Posterior vena cava (tissue), 2 donors: ENCODE measurements at regions of chr2 and their contacts with region 1.

Region 1: DNA sequence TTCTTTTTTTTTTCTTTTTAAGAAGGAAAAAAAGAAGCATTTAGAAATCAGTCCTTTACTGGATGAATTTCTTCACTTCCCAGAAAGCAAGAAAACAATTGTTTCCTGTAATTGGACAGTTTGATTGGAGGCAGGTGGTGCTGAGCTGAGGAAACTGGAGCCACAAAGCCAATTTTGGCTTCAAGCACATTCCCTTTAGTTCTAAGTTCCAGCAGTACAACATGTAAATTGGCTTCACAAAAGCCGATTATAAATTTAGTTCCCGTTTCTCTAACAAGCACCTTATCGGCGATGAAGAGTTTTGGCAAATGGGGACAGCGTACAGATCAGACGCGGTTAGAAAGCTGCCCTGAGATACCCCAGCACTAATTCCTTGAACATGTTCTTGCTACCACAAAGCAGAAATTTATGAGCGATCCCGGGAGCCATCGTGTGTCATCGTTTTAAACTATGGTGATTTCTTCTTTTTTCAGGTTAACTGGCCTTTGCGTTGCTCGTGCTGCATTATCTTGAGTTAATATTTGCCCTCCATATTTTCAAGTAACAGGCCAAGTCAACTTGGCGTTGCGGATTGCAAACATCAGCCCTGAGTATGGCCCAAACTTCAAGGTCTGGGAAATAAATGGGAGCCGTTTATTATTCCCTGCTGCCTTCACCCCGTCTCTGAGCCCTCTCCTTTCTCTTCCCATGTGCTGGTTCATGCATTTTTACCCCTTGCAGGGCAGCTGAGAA is 190.4 kb upstream of the ID2 start:
- DNase-seq: no peak

Region 2: DNA sequence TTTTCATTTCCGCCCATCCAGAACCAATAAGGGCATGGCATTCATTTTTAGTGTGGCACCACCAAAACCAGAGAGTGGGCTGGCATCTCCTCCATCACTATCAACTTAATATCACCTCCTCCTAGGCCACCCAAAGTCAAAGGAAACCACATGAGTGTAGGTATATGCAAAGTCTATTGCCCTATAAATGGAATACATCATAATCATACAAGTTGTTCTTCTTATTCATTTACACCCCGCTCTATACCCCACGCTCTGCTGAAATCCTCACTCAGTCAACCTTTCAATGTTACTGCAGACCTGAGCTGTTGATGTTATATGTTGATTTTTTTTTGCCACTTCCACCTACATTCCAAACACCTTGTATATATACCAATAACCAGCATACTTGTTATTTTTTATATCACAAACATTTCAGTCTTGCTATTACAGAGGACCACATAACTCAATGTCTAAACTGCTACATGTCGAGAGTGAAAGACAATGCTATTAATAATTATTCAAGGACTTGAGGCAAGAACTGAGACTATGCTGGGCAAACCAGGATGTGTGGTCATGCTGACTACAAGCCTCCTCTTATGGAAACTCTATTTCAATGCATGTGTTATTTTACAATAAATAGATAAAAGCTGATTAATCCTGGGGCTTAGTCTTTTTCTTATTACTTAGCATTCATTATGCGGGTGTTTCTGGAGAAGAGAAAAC is 276.2 kb before region 1 on chr2:
- intact Hi-C with region 1: no loop called
- DNase-seq: no peak

Region 3: DNA sequence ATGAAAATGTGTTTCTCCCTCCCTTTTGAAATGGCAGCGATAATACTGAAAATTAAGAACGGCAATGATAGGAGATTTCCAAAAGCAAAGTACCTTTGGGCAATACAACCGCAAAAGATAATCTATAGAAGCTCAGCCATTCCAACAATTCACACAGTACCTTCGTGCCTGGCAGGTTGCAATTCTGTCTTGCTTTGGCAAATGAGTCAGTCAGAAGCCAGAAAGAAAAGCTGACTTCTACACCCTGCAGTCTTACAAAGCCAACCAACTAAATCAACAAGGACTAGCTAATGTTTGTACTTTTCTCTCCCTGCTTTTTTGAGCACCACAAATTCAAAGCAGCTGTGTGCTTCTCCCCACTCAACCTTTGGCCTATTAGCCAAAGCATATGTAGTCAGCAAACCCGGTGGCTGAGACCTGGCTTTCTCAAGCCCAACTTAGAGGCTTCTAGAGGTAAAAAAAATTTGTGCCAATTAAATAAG is 164.7 kb after region 1 on chr2:
- intact Hi-C with region 1: loop called in 1 of 2 experiments (anchors 10 kb)
- DNase-seq: no peak